Right ventricle myocardium inferior (tissue), 1 donor: ENCODE measurements at regions of chr7 and their contacts with region 1.

Region 1: GRCh38 chr7:81469869-81470723 is 299.8 kb downstream of the HGF start:
- DNase-seq: no peak
- ATAC-seq: peak; percentile 87

Region 2: GRCh38 chr7:80699045-80699638 is 771.0 kb before region 1 on chr7:
- intact Hi-C with region 1: loop called (anchors 5 kb)
- DNase-seq: no peak
- ATAC-seq: peak; percentile 69

Region 3: DNA sequence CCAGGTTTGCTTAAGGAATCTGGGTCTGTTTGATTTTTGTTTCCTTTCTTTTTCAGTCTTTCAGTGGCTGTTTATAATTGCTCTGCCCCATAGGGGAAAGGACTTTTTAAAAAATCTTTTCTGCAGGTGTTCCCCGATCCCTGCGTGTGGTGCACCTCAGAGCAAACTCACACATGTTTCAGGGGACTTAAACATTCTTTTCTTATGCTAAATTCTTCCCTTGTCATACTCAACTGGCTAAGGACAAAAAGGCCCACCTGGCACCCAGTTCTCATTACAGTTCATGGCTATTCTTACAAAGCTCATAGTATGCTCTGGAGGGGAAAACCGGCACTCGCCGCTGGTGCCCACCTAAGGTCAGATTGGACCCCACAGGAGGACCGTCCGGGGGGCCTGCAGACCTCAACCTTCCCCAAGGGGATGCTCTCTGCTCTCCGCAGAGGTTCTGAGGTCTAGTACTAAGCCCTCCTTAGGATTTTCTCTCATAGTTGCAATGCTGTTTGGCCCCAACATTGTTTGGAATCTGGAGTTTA is 79.5 kb after region 1 on chr7:
- intact Hi-C with region 1: no loop called
- DNase-seq: no peak
- ATAC-seq: no peak